CD4-positive, alpha-beta memory T cell (primary cell): ENCODE measurements at regions of chr12 and their contacts with region 1.

Region 1: GRCh38 chr12:8078398-8078797 is 3.7 kb upstream of the NECAP1 start:
- DNase-seq: peak; percentile 74 to 84 (median 79)
- H3K4me3 ChIP-seq: no peak overlapping the region
- H3K4me3 Mint-ChIP-seq: peak overlapping the region in 4 of 8 donors; percentile 12 to 45 (median 16)
- H3K27ac ChIP-seq: peak overlapping the region; percentile 35
- H3K27ac Mint-ChIP-seq: peak overlapping the region; percentile 55 to 98 (median 92)
- H3K4me1 ChIP-seq: peaks cover 35% of the 10 kb centered on the region
- H3K4me1 Mint-ChIP-seq: peaks cover 28 to 66% (median 40%) of the 10 kb centered on the region in 4 donors
- H3K27me3 ChIP-seq: no peaks in the 10 kb centered on the region
- H3K27me3 Mint-ChIP-seq: peaks cover 0 to 2% of the 10 kb centered on the region in 2 donors

Region 2: GRCh38 chr12:7188562-7189397 is 889.6 kb before region 1 on chr12:
- CTCF ChIA-PET with region 1: no interaction called
- POLR2A ChIA-PET with region 1: no interaction called
- intact Hi-C with region 1: loop called (anchors 2 kb)
- DNase-seq: peak; percentile 52 to 64 (median 57)
- H3K4me3 ChIP-seq: peak overlapping the region; percentile 82 to 99
- H3K4me3 Mint-ChIP-seq: peak overlapping the region; percentile 95 to 100 (median 98)
- H3K27ac ChIP-seq: peak overlapping the region; percentile 94
- H3K27ac Mint-ChIP-seq: peak overlapping the region; percentile 96 to 99 (median 99)
- H3K4me1 ChIP-seq: peaks cover 39% of the 10 kb centered on the region
- H3K4me1 Mint-ChIP-seq: peaks cover 23 to 55% (median 37%) of the 10 kb centered on the region in 4 donors
- H3K27me3 ChIP-seq: no peaks in the 10 kb centered on the region
- H3K27me3 Mint-ChIP-seq: no peaks in the 10 kb centered on the region

Region 3: GRCh38 chr12:7859552-7859951 is 218.8 kb before region 1 on chr12:
- CTCF ChIA-PET with region 1: interaction called, 53 read pairs
- POLR2A ChIA-PET with region 1: interaction called, 5 read pairs
- intact Hi-C with region 1: loop called (anchors 1 kb)
- DNase-seq: no peak
- H3K4me3 ChIP-seq: no peak overlapping the region
- H3K4me3 Mint-ChIP-seq: no peak overlapping the region
- H3K27ac ChIP-seq: no peak overlapping the region
- H3K27ac Mint-ChIP-seq: peak overlapping the region in 4 of 7 donors; percentile 5 to 47 (median 30)
- H3K4me1 ChIP-seq: no peaks in the 10 kb centered on the region
- H3K4me1 Mint-ChIP-seq: peaks cover 6 to 13% (median 9%) of the 10 kb centered on the region in 4 donors
- H3K27me3 ChIP-seq: no peaks in the 10 kb centered on the region
- H3K27me3 Mint-ChIP-seq: peaks cover 1 to 4% of the 10 kb centered on the region in 2 donors

Region 4: GRCh38 chr12:7959701-7960121 is 118.7 kb before region 1 on chr12:
- CTCF ChIA-PET with region 1: interaction called, 11 read pairs
- POLR2A ChIA-PET with region 1: interaction called, 8 read pairs
- intact Hi-C with region 1: no loop called
- DNase-seq: peak; percentile 32 to 59 (median 55)
- H3K4me3 ChIP-seq: peak overlapping the region; percentile 30 to 54
- H3K4me3 Mint-ChIP-seq: peak overlapping the region; percentile 81 to 96 (median 92)
- H3K27ac ChIP-seq: peak overlapping the region; percentile 69
- H3K27ac Mint-ChIP-seq: peak overlapping the region; percentile 85 to 99 (median 96)
- H3K4me1 ChIP-seq: peaks cover 39% of the 10 kb centered on the region
- H3K4me1 Mint-ChIP-seq: peaks cover 26 to 44% (median 35%) of the 10 kb centered on the region in 4 donors
- H3K27me3 ChIP-seq: no peaks in the 10 kb centered on the region
- H3K27me3 Mint-ChIP-seq: no peaks in the 10 kb centered on the region

Region 5: DNA sequence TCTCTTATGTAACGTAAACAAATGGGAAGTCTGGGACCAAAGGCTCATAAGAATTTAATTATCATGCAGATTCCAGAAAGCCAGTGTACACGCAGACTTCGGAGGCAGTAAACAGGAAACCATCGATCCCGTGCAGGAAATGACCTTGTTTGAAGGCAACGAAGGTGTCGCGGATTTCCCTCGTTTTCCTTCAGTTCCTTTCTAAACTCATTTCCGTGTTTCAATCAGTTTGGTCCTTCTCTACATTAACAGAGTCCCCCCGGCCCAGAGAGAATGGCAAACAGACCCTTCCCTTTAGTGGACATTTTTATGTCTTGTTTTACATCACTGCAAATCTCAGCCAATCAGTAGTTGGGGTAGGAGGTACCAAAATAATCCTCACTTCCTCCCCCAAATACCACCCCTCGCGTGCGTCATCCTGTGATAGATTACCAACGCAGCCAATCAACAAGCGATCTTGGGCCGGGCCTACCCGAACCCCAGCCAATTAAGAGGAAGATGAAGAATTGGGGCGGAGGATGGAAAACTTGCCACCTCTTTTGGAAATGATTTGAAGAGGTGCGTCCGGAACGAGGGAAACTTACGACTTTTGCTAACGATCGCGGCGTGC is 52.0 kb before region 1 on chr12:
- CTCF ChIA-PET with region 1: interaction called, 85 read pairs
- POLR2A ChIA-PET with region 1: interaction called, 23 read pairs
- intact Hi-C with region 1: loop called (anchors 1 kb)
- DNase-seq: peak; percentile 97 to 99 (median 98)
- H3K4me3 ChIP-seq: peak overlapping the region; percentile 89 to 94
- H3K4me3 Mint-ChIP-seq: peak overlapping the region; percentile 90 to 99 (median 96)
- H3K27ac ChIP-seq: peak overlapping the region; percentile 99
- H3K27ac Mint-ChIP-seq: peak overlapping the region; percentile 96 to 100 (median 100)
- H3K4me1 ChIP-seq: peaks cover 14% of the 10 kb centered on the region
- H3K4me1 Mint-ChIP-seq: peaks cover 10 to 20% (median 15%) of the 10 kb centered on the region in 4 donors
- H3K27me3 ChIP-seq: no peaks in the 10 kb centered on the region
- H3K27me3 Mint-ChIP-seq: no peaks in the 10 kb centered on the region

Region 6: GRCh38 chr12:8045952-8046944 is 32.1 kb before region 1 on chr12:
- CTCF ChIA-PET with region 1: interaction called, 305 read pairs
- POLR2A ChIA-PET with region 1: interaction called, 45 read pairs
- intact Hi-C with region 1: loop called (anchors 1 kb)
- DNase-seq: peak; percentile 77 to 82 (median 78)
- H3K4me3 ChIP-seq: no peak overlapping the region
- H3K4me3 Mint-ChIP-seq: peak overlapping the region in 1 of 8 donors; percentile 36
- H3K27ac ChIP-seq: no peak overlapping the region
- H3K27ac Mint-ChIP-seq: peak overlapping the region; percentile 3 to 76 (median 66)
- H3K4me1 ChIP-seq: peaks cover 6% of the 10 kb centered on the region
- H3K4me1 Mint-ChIP-seq: peaks cover 7 to 16% (median 8%) of the 10 kb centered on the region in 4 donors
- H3K27me3 ChIP-seq: no peaks in the 10 kb centered on the region
- H3K27me3 Mint-ChIP-seq: no peaks in the 10 kb centered on the region

Region 7: DNA sequence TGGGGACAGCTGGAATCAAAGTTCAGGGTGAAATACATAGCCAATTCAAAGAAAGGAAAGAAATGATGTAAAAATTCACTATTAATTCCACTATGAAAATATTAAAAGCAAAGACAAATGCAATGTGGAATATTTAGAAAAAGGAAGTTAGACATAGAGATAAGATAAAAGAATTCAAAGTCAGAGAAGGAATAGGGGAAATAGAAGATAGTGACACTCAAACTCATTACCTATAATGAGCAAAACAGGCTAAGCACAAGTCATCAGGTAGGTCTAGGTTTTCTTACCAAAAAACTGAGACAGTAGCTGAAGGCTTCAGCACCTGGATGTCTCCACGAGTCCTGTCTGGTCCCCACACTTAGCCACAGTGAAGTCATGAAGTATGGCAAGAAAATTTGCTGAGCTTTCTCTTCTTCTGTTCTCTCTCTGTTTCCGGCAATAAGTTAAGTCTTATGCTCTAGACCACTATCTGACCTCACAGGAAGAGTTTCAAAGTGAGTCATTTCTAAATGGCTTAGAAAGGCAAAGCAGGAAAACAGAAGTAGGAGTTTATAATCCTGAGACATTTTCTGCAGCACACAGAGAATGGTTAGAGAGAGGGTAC is 12.3 kb before region 1 on chr12 and contains the start of gene C3AR1:
- CTCF ChIA-PET with region 1: interaction called, 31 read pairs
- POLR2A ChIA-PET with region 1: interaction called, 40 read pairs
- intact Hi-C with region 1: loop called (anchors 1 kb)
- DNase-seq: peak; percentile 68 to 85 (median 76)
- H3K4me3 ChIP-seq: peak within 1 kb of the TSS in 1 of 2 donors; percentile 16
- H3K4me3 Mint-ChIP-seq: peak within 1 kb of the TSS; percentile 39 to 83 (median 79)
- H3K27ac ChIP-seq: peak within 1 kb of the TSS; percentile 44
- H3K27ac Mint-ChIP-seq: peak within 1 kb of the TSS; percentile 80 to 98 (median 94)
- H3K4me1 ChIP-seq: peaks cover 34% of the 10 kb centered on the region
- H3K4me1 Mint-ChIP-seq: peaks cover 27 to 55% (median 40%) of the 10 kb centered on the region in 4 donors
- H3K27me3 ChIP-seq: no peaks in the 10 kb centered on the region
- H3K27me3 Mint-ChIP-seq: no peaks in the 10 kb centered on the region
- total RNA-seq, gene C3AR1: 4.6 to 6.1 TPM